ENCODE measurements at regions of chr20 and their contacts with region 1.

Region 1: GRCh38 chr20:20052074-20052970 is at the starts of genes CFAP61 and CRNKL1:
- DNase-seq: peak; percentile 91 to 99 (median 98)
- ATAC-seq: peak; percentile 92
- H3K4me3 Mint-ChIP-seq: peak within 1 kb of the TSS; percentile 88 to 100 (median 99)
- H3K27ac Mint-ChIP-seq: peak within 1 kb of the TSS; percentile 95 to 100 (median 99)
- H3K4me1 Mint-ChIP-seq: peaks cover 14 to 36% (median 30%) of the 10 kb centered on the region in 4 donors
- H3K27me3 Mint-ChIP-seq: peaks cover 0 to 6% (median 0%) of the 10 kb centered on the region in 5 donors
- polyA plus RNA-seq, gene CFAP61: not detected
- polyA plus RNA-seq, gene CRNKL1: 6.9 to 14.6 (median 9.0) TPM

Region 2: GRCh38 chr20:20017001-20017843 is 35.1 kb before region 1 on chr20 and contains the start of gene NAA20:
- POLR2A ChIA-PET with region 1: interaction called, 48 read pairs
- DNase-seq: peak; percentile 84 to 94 (median 88)
- ATAC-seq: peak; percentile 96 to 97
- H3K4me3 Mint-ChIP-seq: peak within 1 kb of the TSS; percentile 87 to 96 (median 93)
- H3K27ac Mint-ChIP-seq: peak within 1 kb of the TSS; percentile 90 to 99 (median 96)
- H3K4me1 Mint-ChIP-seq: peaks cover 31 to 61% (median 50%) of the 10 kb centered on the region in 4 donors
- H3K27me3 Mint-ChIP-seq: no peaks in the 10 kb centered on the region
- polyA plus RNA-seq, gene NAA20: 75.0 to 82.4 (median 79.9) TPM

Region 3: GRCh38 chr20:20034486-20034885 is 17.8 kb before region 1 on chr20:
- POLR2A ChIA-PET with region 1: interaction called, 10 read pairs
- DNase-seq: no peak
- ATAC-seq: no peak
- H3K4me3 Mint-ChIP-seq: no peak overlapping the region
- H3K27ac Mint-ChIP-seq: peak overlapping the region in 1 of 10 donors; percentile 47
- H3K4me1 Mint-ChIP-seq: peaks cover 0 to 8% (median 3%) of the 10 kb centered on the region in 4 donors
- H3K27me3 Mint-ChIP-seq: no peaks in the 10 kb centered on the region

Region 4: GRCh38 chr20:20063941-20064702 is 11.8 kb after region 1 on chr20:
- POLR2A ChIA-PET with region 1: no interaction called
- DNase-seq: no peak
- ATAC-seq: no peak
- H3K4me3 Mint-ChIP-seq: no peak overlapping the region
- H3K27ac Mint-ChIP-seq: no peak overlapping the region
- H3K4me1 Mint-ChIP-seq: no peaks in the 10 kb centered on the region
- H3K27me3 Mint-ChIP-seq: peaks cover 3 to 27% (median 17%) of the 10 kb centered on the region in 5 donors

Measured in naive thymus-derived CD8-positive, alpha-beta T cell (primary cell).